ENCODE measurements at regions of chr17 and their contacts with region 1.

Region 1: GRCh38 chr17:47978324-47978723 is 7.4 kb downstream of the CDK5RAP3 start:
- H3K4me3 ChIP-seq: no peak overlapping the region
- H3K27ac ChIP-seq: no peak overlapping the region
- H3K4me1 ChIP-seq: no peaks in the 10 kb centered on the region
- CTCF ChIP-seq: peak; percentile 73

Region 2: GRCh38 chr17:47990962-47991731 is 12.8 kb after region 1 on chr17:
- CTCF ChIA-PET with region 1: interaction called, 16 read pairs
- POLR2A ChIA-PET with region 1: interaction called, 3 read pairs
- H3K4me3 ChIP-seq: no peak overlapping the region
- H3K27ac ChIP-seq: no peak overlapping the region
- H3K4me1 ChIP-seq: peaks cover 4% of the 10 kb centered on the region; the same call in 1 of the 2 replicates
- CTCF ChIP-seq: no peak

Region 3: DNA sequence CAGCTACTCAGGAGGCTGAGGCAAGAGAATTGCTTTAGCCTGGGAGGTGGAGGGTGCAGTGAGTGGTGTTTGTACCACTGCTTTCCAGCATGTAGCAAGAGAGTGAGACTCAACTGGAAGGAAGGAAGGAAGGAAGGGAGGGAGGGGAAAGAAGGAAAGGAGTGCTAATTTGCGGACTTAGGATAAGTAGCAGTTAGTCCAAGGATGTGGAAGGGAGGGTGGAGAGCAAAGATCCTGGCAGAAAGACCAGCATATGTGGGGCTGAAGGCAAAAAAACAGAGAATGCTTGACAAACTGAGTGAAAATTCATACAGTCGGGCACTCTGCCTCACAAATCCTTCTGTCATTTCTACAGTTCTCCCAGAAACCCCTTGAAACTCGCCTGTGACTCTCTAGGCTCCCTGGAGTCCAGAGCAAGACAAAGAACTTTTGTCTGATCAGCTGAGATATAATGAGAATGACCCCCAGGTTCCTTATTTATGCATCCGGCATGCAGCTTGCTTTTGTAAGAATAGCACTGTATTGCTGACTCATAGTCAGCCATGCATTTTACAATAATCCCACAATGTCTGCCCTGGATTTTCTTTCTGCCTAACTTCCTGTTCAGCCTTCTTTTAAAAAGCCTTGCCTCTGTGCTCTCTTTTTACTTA is 24.1 kb after region 1 on chr17:
- CTCF ChIA-PET with region 1: interaction called, 23 read pairs
- POLR2A ChIA-PET with region 1: no interaction called
- H3K4me3 ChIP-seq: no peak overlapping the region
- H3K27ac ChIP-seq: peak overlapping the region; percentile 42; the same call in 1 of the 2 replicates
- H3K4me1 ChIP-seq: peaks cover 11% of the 10 kb centered on the region; the same call in 1 of the 2 replicates
- CTCF ChIP-seq: no peak